Activated CD4-positive, alpha-beta memory T cell treated with anti-CD3 and anti-CD28 coated beads for 36 hours (primary cell): ENCODE measurements at regions of chr17 and their contacts with region 1.

Region 1: GRCh38 chr17:30104575-30105339 is 11.9 kb upstream of the NSRP1 start:
- DNase-seq: peak; percentile 82
- H3K4me3 Mint-ChIP-seq: peak overlapping the region; percentile 75
- H3K27ac Mint-ChIP-seq: no peak overlapping the region
- H3K4me1 Mint-ChIP-seq: peaks cover 5% of the 10 kb centered on the region
- H3K27me3 Mint-ChIP-seq: peaks cover 5% of the 10 kb centered on the region

Region 2: DNA sequence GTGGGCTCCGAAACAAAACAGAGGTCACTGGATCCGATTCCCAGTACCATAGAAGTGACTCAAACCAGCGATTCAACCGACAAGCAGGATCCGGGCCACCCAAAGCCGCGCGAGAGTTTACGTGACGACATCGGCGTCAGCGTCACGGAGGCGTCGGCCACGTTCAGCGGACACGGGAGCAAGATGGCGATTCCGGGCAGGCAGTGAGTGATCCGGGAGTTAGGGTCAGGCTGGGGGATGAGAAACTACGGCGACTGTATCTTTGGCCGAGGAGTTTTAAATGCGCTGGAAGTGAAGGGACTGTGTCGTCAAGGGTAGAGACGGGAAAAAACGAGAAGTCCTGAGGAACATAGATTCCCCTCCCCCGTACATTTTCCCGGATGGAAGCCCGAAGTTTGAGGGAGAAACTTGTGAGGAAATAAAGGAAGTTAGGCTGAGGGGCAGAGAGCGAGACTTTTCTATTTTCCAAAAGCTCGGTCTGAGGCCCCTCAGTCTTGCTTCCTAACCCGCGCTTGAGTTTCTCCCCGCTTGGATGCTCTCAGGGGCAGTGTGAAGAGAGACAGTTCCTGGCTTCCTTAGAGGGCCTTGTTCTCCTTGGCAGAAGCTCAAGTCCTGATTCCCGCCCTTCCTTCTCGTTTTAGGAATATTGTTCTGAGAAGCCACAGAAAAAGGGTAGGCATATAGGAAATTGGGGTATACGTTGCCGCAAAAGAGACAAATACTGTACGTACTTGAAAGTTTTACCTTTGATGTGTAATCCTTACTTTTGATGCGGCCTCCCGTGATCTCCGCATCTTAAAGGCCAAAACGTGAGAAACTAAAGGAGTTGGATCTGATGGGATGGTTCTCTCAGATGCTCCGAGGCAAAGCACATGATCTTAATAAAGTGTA is 12.1 kb after region 1 on chr17 and contains the start of gene NSRP1:
- CTCF ChIA-PET with region 1: interaction called, 52 read pairs
- POLR2A ChIA-PET with region 1: no interaction called
- intact Hi-C with region 1: no loop called
- DNase-seq: peak; percentile 97
- H3K4me3 Mint-ChIP-seq: peak within 1 kb of the TSS; percentile 96
- H3K27ac Mint-ChIP-seq: peak within 1 kb of the TSS; percentile 99
- H3K4me1 Mint-ChIP-seq: peaks cover 41% of the 10 kb centered on the region
- H3K27me3 Mint-ChIP-seq: no peaks in the 10 kb centered on the region
- total RNA-seq, gene NSRP1: 24.3 to 26.5 TPM

Region 3: DNA sequence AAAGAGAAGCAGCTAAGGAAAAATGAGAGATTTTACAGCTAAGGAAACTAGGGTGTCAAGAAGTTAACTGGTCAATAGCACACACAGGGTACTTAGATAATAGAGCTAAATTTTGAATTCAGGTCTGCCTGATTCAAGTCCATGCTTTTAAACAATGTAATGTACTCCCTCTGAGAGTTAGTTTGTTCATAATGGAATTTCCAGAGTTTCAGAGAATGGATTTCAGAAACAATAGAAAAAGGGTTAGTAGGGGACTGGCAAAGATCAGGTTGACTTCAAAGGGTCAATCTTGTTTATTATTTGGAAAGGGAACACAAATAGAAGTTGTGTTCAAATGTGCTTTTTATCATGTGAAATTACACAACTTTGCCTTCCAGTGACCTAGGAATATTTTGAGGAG is 29.8 kb after region 1 on chr17:
- CTCF ChIA-PET with region 1: interaction called, 10 read pairs
- POLR2A ChIA-PET with region 1: interaction called, 3 read pairs
- intact Hi-C with region 1: no loop called
- DNase-seq: no peak
- H3K4me3 Mint-ChIP-seq: no peak overlapping the region
- H3K27ac Mint-ChIP-seq: no peak overlapping the region
- H3K4me1 Mint-ChIP-seq: peaks cover 14% of the 10 kb centered on the region
- H3K27me3 Mint-ChIP-seq: no peaks in the 10 kb centered on the region

Region 4: GRCh38 chr17:30161601-30162000 is 56.8 kb after region 1 on chr17:
- CTCF ChIA-PET with region 1: interaction called, 5 read pairs
- POLR2A ChIA-PET with region 1: no interaction called
- intact Hi-C with region 1: loop called (anchors 10 kb)
- DNase-seq: no peak
- H3K4me3 Mint-ChIP-seq: no peak overlapping the region
- H3K27ac Mint-ChIP-seq: no peak overlapping the region
- H3K4me1 Mint-ChIP-seq: peaks cover 34% of the 10 kb centered on the region
- H3K27me3 Mint-ChIP-seq: no peaks in the 10 kb centered on the region

Region 5: GRCh38 chr17:30236766-30237165 is 132.0 kb after region 1 on chr17:
- CTCF ChIA-PET with region 1: interaction called, 20 read pairs
- POLR2A ChIA-PET with region 1: no interaction called
- intact Hi-C with region 1: loop called (anchors 5 kb)
- DNase-seq: peak; percentile 49
- H3K4me3 Mint-ChIP-seq: peak overlapping the region; percentile 27
- H3K27ac Mint-ChIP-seq: no peak overlapping the region
- H3K4me1 Mint-ChIP-seq: peaks cover 16% of the 10 kb centered on the region
- H3K27me3 Mint-ChIP-seq: peaks cover 60% of the 10 kb centered on the region

Region 6: GRCh38 chr17:30344283-30345088 is 239.7 kb after region 1 on chr17:
- CTCF ChIA-PET with region 1: interaction called, 42 read pairs
- POLR2A ChIA-PET with region 1: no interaction called
- intact Hi-C with region 1: no loop called
- DNase-seq: no peak
- H3K4me3 Mint-ChIP-seq: no peak overlapping the region
- H3K27ac Mint-ChIP-seq: no peak overlapping the region
- H3K4me1 Mint-ChIP-seq: peaks cover 18% of the 10 kb centered on the region
- H3K27me3 Mint-ChIP-seq: no peaks in the 10 kb centered on the region